Mammary epithelial cell (primary cell): ENCODE measurements at regions of chr4 and their contacts with region 1.

Region 1: GRCh38 chr4:74133786-74134499 is 24.0 kb upstream of the MTHFD2L start:
- DNase-seq: peak; percentile 76
- H3K4me3 ChIP-seq: no peak overlapping the region
- H3K27ac ChIP-seq: peak overlapping the region; percentile 30
- H3K4me1 ChIP-seq: peaks cover 7% of the 10 kb centered on the region
- H3K27me3 ChIP-seq: no peaks in the 10 kb centered on the region
- CTCF ChIP-seq: peak; percentile 83 to 89

Region 2: DNA sequence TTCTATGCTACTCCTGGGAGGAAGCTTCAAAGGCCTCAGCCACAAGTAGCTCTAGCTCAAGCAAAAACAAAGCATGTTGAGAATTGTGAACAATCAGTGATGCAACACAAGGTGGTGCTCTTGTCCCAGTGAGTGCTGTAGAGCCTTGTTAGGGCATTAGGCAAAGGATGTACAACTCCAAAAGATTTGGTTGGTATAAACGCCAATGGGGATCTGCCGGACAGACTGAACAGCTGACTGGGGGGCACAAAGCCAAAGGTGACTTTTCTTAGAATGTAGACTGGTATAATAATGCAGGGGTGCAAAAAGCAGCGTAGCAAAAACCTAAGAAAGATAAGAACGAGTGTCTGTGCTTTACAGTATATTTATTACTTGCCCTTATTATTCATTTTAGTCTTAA is 792.5 kb before region 1 on chr4:
- CTCF ChIA-PET with region 1: no interaction called
- dilution Hi-C with region 1: no loop called
- in situ Hi-C with region 1: loop called in 1 of 2 experiments (anchors 25 kb)
- intact Hi-C with region 1: loop called (anchors 5 kb)
- DNase-seq: peak; percentile 51
- H3K4me3 ChIP-seq: no peak overlapping the region
- H3K27ac ChIP-seq: no peak overlapping the region
- H3K4me1 ChIP-seq: no peaks in the 10 kb centered on the region
- H3K27me3 ChIP-seq: peaks cover 3% of the 10 kb centered on the region
- CTCF ChIP-seq: peak; percentile 67 to 87

Region 3: DNA sequence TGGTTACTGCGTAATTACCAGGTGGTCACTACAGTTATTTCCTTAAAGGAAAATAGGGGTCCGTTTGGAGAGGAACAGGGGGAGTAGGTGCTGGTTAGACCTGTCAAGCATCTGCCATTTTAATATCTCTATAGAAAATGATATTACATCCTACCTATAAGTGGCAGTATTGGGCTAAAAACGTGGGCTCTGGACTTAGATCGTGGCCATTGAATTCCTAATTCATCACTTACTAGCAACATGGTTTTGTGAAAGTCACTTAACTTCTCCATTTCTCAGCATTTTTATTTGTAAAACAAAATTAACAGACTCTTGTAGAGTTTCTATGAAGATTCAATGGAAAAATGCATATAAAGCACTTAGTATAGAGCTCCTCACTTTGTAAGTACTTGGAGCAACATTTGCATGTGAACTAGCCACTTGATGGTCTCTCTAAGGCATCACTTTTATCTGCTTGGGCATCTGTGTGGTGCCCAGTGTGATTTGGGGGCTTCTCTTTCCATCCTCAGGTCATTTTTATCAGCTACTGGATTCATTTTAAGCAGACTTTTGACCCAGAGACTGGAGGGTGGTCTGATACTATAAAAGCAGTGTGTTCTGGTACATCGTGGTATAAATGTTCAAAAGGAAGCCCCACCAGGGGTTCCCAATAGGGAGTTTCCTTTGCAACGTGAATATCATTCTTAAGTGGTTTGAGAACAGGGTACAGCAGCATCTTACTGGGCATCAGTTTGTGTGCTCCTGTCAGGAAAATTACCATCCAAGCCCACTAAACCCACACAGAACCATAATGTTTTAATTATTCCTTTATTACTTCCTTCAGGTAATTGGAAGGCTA is 471.0 kb before region 1 on chr4:
- CTCF ChIA-PET with region 1: no interaction called
- dilution Hi-C with region 1: loop called (anchors 5 kb)
- in situ Hi-C with region 1: no loop called
- intact Hi-C with region 1: loop called (anchors 1 kb)
- DNase-seq: peak; percentile 64
- H3K4me3 ChIP-seq: no peak overlapping the region
- H3K27ac ChIP-seq: peak overlapping the region; percentile 74
- H3K4me1 ChIP-seq: peaks cover 19% of the 10 kb centered on the region
- H3K27me3 ChIP-seq: no peaks in the 10 kb centered on the region
- CTCF ChIP-seq: peak; percentile 48 to 59

Region 4: DNA sequence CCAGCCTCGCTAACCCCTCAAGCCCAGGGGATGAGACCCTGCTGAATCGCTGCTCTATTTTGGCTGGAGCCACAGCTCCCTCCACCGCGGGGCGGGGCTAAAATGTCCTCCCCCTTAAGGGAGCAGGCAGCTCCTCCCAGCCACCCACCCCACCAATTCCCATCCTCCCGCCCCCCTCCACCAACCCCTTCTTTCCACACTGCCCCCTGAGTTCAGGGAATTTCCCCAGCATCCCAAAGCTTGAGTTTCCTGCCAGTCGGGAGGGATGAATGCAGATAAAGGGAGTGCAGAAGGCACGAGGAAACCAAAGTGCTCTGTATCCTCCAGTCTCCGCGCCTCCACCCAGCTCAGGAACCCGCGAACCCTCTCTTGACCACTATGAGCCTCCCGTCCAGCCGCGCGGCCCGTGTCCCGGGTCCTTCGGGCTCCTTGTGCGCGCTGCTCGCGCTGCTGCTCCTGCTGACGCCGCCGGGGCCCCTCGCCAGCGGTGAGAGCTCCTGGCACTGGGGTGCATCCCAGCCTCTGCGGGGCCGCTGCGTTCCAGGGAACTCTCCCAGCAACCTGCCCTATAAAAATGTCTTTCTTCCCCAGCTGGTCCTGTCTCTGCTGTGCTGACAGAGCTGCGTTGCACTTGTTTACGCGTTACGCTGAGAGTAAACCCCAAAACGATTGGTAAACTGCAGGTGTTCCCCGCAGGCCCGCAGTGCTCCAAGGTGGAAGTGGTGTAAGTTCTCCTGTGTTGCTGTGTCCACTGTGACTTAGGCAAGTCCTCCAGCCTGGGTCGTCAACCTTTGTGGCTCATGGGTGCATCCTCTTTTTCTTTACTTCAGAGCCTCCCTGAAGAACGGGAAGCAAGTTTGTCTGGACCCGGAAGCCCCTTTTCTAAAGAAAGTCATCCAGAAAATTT is 297.3 kb before region 1 on chr4 and contains the start of gene CXCL6:
- CTCF ChIA-PET with region 1: no interaction called
- dilution Hi-C with region 1: loop called (anchors 25 kb)
- in situ Hi-C with region 1: no loop called
- intact Hi-C with region 1: no loop called
- DNase-seq: no peak
- H3K4me3 ChIP-seq: no peak within 1 kb of the TSS
- H3K27ac ChIP-seq: no peak within 1 kb of the TSS
- H3K4me1 ChIP-seq: peaks cover 20% of the 10 kb centered on the region
- H3K27me3 ChIP-seq: no peaks in the 10 kb centered on the region
- CTCF ChIP-seq: no peak
- total RNA-seq, gene CXCL6: 0.17 TPM in 1 of 2 donors, not detected in the other

Region 5: DNA sequence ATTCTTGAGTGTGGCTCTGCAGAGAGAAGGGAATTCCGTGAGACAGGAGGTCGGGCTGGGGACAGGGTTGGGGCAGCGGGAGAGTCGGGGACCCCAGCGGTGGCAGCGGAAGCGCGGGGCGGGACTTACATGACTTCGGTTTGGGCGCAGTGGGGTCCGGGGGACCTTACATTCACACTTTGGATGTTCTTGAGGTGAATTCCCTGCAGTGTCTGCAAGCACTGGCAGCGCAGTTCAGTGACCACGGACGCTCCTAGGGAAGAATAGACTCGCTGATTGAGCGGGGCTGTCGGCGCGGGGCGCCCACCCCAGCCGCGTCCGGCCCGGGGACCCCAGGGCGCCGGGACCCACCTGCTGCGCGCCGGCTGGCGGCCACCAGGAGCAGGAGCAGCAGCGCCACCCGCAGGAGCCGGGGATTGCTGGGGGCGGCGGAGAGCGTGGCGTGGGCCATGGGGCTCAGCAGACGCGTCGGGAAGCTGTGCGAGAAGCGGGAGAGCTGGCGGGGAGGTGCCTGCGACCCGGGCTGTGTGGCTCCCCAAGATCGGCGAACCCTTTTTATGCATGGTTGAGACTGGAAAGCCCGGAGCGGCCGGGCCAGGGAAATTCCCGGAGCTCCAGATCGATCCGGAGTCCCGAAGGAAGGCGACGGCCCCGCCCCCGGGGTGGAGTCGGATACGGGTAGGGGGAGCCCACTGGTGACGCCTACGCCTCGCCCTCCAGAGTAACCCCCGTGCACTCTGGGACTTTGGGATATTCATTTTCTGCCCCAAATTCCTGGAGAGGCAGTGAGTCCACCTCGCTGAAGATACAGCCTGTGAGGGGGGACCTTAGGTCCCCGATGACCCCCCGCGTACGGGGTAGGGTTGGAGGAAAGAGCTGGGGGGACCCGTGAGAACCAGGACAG is 95.5 kb before region 1 on chr4 and contains the start of gene CXCL3:
- CTCF ChIA-PET with region 1: no interaction called
- dilution Hi-C with region 1: no loop called
- in situ Hi-C with region 1: no loop called
- intact Hi-C with region 1: loop called (anchors 1 kb)
- DNase-seq: peak; percentile 94
- H3K4me3 ChIP-seq: peak within 1 kb of the TSS; percentile 73 to 82 (median 77)
- H3K27ac ChIP-seq: peak within 1 kb of the TSS; percentile 86
- H3K4me1 ChIP-seq: peaks cover 18% of the 10 kb centered on the region
- H3K27me3 ChIP-seq: no peaks in the 10 kb centered on the region
- CTCF ChIP-seq: peak; percentile 2 to 30
- total RNA-seq, gene CXCL3: 1.3 to 29.4 TPM

Region 6: DNA sequence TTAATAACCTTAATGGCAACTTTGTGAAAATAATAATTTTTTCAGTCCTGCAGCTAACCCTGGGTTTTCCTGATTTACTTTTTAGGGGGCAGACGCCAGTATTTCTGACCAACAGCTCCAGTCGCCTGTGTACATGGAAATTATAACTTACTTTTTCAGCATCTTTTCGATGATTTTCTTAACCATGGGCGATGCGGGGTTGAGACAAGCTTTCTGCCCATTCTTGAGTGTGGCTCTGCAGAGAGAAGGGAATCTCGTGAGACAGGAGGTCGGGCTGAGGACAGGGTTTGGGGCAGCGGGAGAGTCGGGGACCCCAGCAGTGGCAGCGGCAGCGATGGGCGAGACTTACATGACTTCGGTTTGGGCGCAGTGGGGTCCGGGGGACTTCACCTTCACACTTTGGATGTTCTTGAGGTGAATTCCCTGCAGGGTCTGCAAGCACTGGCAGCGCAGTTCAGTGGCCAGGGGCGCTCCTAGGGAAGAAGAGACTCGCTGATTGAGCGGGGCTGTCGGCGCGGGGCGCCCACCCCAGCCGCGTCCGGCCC is 35.4 kb before region 1 on chr4:
- CTCF ChIA-PET with region 1: no interaction called
- dilution Hi-C with region 1: no loop called
- in situ Hi-C with region 1: no loop called
- intact Hi-C with region 1: loop called (anchors 1 kb)
- DNase-seq: no peak
- H3K4me3 ChIP-seq: peak overlapping the region; percentile 71 to 88 (median 85)
- H3K27ac ChIP-seq: peak overlapping the region; percentile 94
- H3K4me1 ChIP-seq: peaks cover 17% of the 10 kb centered on the region
- H3K27me3 ChIP-seq: no peaks in the 10 kb centered on the region
- CTCF ChIP-seq: no peak